ENCODE measurements at regions of chr12 and their contacts with region 1.

Region 1: DNA sequence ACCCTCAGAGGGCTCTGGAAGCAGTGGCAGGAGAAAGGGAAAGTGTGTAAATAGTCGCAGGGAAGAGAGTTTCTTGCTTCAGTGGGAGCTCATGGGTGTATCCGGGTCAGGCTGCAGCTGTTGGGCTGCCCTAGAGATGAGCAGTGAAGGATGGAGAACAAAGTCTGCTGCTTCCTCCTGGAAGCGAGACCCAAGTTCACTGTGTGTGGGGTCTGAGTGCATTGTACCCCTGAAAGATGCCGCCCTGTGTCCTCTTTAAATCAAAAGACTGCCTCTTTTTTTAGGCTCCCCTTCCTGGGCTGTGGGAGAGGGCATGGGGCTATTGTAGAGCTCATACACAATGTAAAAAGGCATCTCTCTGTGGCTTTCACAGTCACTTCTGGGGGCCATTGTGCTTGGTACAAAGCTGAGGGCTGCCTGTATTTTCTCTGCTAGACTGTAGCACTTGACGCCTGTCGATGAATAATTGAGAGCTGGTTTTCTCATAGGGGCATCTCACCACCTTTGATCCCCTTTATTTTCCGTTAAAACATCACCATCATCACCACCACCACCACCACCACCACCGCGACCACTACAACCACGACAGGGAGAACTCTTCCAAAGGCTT is 16.7 kb downstream of the CHST11 start:
- DNase-seq: no peak
- ATAC-seq: peak; percentile 76
- H3K4me3 ChIP-seq: peak overlapping the region; percentile 48
- H3K27ac ChIP-seq: peak overlapping the region; percentile 66
- H3K4me1 ChIP-seq: peaks cover 45% of the 10 kb centered on the region
- H3K27me3 ChIP-seq: no peaks in the 10 kb centered on the region
- CTCF ChIP-seq: no peak
- EP300 ChIP-seq: no peak
- POLR2A ChIP-seq: peak; percentile 54; the same call in 1 of the 2 replicates
- RAD21 ChIP-seq: no peak

Region 2: GRCh38 chr12:104462931-104463339 is 10.5 kb before region 1 on chr12:
- CTCF ChIA-PET with region 1: interaction called, 16 read pairs
- POLR2A ChIA-PET with region 1: interaction called, 64 read pairs
- RAD21 ChIA-PET with region 1: interaction called, 90 read pairs
- SMC1A ChIA-PET with region 1: interaction called, 73 read pairs
- in situ Hi-C with region 1: no loop called
- intact Hi-C with region 1: loop called (anchors 2 kb)
- DNase-seq: peak; percentile 88
- ATAC-seq: peak; percentile 52
- H3K4me3 ChIP-seq: peak overlapping the region; percentile 53
- H3K27ac ChIP-seq: peak overlapping the region; percentile 80
- H3K4me1 ChIP-seq: peaks cover 50% of the 10 kb centered on the region
- H3K27me3 ChIP-seq: no peaks in the 10 kb centered on the region
- CTCF ChIP-seq: no peak
- EP300 ChIP-seq: peak; percentile 25 to 85; a peak in 3 of 4 replicates
- POLR2A ChIP-seq: no peak
- RAD21 ChIP-seq: no peak

Region 3: GRCh38 chr12:104485651-104486362 is 12.3 kb after region 1 on chr12:
- CTCF ChIA-PET with region 1: interaction called, 7 read pairs
- POLR2A ChIA-PET with region 1: interaction called, 7 read pairs
- RAD21 ChIA-PET with region 1: interaction called, 15 read pairs
- SMC1A ChIA-PET with region 1: interaction called, 21 read pairs
- in situ Hi-C with region 1: no loop called
- intact Hi-C with region 1: no loop called
- DNase-seq: no peak
- ATAC-seq: peak; percentile 65
- H3K4me3 ChIP-seq: no peak overlapping the region
- H3K27ac ChIP-seq: peak overlapping the region; percentile 52
- H3K4me1 ChIP-seq: peaks cover 35% of the 10 kb centered on the region
- H3K27me3 ChIP-seq: no peaks in the 10 kb centered on the region
- CTCF ChIP-seq: no peak
- EP300 ChIP-seq: no peak
- POLR2A ChIP-seq: no peak
- RAD21 ChIP-seq: no peak

Region 4: DNA sequence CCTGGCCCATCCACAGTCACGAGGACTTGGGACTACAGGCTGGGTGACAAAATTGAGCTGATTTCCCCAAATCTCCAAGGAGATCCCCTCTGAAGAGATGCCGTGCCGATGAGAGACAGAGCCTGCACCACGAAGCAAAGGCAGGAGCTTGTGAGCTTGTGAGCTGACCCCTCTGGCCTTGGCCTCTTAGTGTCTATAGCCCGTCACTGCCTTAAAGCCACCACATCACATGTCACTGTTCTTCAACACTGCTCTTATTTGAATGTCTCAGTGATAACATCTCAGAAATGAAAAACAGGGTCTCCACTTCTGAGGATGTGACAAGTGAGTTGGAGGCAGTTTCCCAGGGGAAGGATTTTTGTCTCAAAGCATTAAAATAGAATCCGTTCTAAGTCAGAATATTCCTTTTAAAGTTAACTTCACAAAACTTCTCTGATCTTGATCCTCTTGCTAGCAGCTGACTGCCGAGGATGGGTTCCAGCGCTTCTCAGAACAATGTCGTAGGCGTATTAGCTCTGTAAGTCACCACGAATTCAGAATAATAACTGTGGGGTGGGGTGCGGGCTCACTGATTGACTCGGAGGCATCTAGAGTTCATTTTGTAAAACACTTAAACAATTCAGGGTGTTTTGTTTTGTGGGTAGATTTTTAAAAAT is 20.8 kb after region 1 on chr12:
- CTCF ChIA-PET with region 1: interaction called, 8 read pairs
- POLR2A ChIA-PET with region 1: interaction called, 8 read pairs
- RAD21 ChIA-PET with region 1: interaction called, 20 read pairs
- SMC1A ChIA-PET with region 1: interaction called, 33 read pairs
- in situ Hi-C with region 1: no loop called
- intact Hi-C with region 1: no loop called
- DNase-seq: peak; percentile 57
- ATAC-seq: peak; percentile 77
- H3K4me3 ChIP-seq: peak overlapping the region; percentile 57
- H3K27ac ChIP-seq: peak overlapping the region; percentile 83
- H3K4me1 ChIP-seq: peaks cover 52% of the 10 kb centered on the region
- H3K27me3 ChIP-seq: no peaks in the 10 kb centered on the region
- CTCF ChIP-seq: no peak
- EP300 ChIP-seq: peak in 1 of 2 experiments; percentile 16; a peak in 1 of 4 replicates
- POLR2A ChIP-seq: peak; percentile 50
- RAD21 ChIP-seq: no peak

Region 5: GRCh38 chr12:104505095-104505818 is 31.8 kb after region 1 on chr12:
- CTCF ChIA-PET with region 1: interaction called, 3 read pairs
- POLR2A ChIA-PET with region 1: interaction called, 6 read pairs
- RAD21 ChIA-PET with region 1: interaction called, 13 read pairs
- SMC1A ChIA-PET with region 1: interaction called, 6 read pairs
- in situ Hi-C with region 1: no loop called
- intact Hi-C with region 1: no loop called
- DNase-seq: peak; percentile 64
- ATAC-seq: peak; percentile 88
- H3K4me3 ChIP-seq: peak overlapping the region; percentile 37; the same call in 1 of the 2 replicates
- H3K27ac ChIP-seq: peak overlapping the region; percentile 43; the same call in 1 of the 2 replicates
- H3K4me1 ChIP-seq: peaks cover 43% of the 10 kb centered on the region
- H3K27me3 ChIP-seq: no peaks in the 10 kb centered on the region
- CTCF ChIP-seq: no peak
- EP300 ChIP-seq: no peak
- POLR2A ChIP-seq: no peak
- RAD21 ChIP-seq: no peak

Region 6: DNA sequence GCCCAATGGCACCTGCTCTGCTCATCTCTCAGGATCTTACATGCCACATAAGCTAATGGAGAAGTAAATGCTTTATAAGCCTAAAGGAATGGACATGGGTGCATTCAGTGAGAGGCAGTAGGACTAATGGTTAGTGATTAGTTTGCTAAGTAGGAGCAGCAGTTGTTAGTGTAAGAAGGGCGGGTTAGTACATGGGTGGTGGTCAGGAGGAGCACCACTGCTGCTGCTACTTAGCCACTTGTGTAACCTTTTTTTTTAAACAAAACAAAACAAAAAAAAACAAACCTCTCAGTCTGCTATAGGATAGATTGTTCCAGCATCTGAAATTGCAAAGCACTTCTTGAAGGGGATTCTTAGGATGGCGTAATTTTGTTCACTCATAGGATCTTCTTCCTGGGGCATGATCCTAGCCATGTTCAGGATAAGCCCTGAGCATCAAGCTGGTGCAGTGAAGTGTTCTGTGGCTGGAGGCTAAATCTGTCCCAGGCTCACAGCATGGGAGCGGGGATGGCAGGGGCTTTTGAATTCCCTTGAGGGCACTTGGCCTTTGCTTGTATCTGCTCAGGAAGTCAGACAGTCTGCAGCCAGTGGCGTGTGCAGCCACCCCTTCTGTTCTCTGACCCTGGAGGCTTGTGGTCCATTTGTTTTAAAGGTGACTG is 46.9 kb after region 1 on chr12:
- CTCF ChIA-PET with region 1: interaction called, 3 read pairs
- POLR2A ChIA-PET with region 1: interaction called, 3 read pairs
- RAD21 ChIA-PET with region 1: interaction called, 5 read pairs
- SMC1A ChIA-PET with region 1: interaction called, 18 read pairs
- in situ Hi-C with region 1: no loop called
- intact Hi-C with region 1: no loop called
- DNase-seq: peak; percentile 75
- ATAC-seq: peak; percentile 79
- H3K4me3 ChIP-seq: no peak overlapping the region
- H3K27ac ChIP-seq: peak overlapping the region; percentile 60
- H3K4me1 ChIP-seq: peaks cover 49% of the 10 kb centered on the region
- H3K27me3 ChIP-seq: no peaks in the 10 kb centered on the region
- CTCF ChIP-seq: no peak
- EP300 ChIP-seq: peak; percentile 31 to 50; a peak in 1 of 4 replicates
- POLR2A ChIP-seq: no peak
- RAD21 ChIP-seq: no peak

Region 7: GRCh38 chr12:104535369-104535768 is 61.9 kb after region 1 on chr12:
- CTCF ChIA-PET with region 1: interaction called, 4 read pairs
- POLR2A ChIA-PET with region 1: interaction called, 5 read pairs
- RAD21 ChIA-PET with region 1: interaction called, 4 read pairs
- SMC1A ChIA-PET with region 1: interaction called, 12 read pairs
- in situ Hi-C with region 1: no loop called
- intact Hi-C with region 1: no loop called
- DNase-seq: no peak
- ATAC-seq: no peak
- H3K4me3 ChIP-seq: no peak overlapping the region
- H3K27ac ChIP-seq: no peak overlapping the region
- H3K4me1 ChIP-seq: peaks cover 9% of the 10 kb centered on the region; the same call in 1 of the 2 replicates
- H3K27me3 ChIP-seq: no peaks in the 10 kb centered on the region
- CTCF ChIP-seq: no peak
- EP300 ChIP-seq: no peak
- POLR2A ChIP-seq: no peak
- RAD21 ChIP-seq: no peak